Uterus (tissue), 4 donors: ENCODE measurements at regions of chr6 and their contacts with region 1.

Region 1: DNA sequence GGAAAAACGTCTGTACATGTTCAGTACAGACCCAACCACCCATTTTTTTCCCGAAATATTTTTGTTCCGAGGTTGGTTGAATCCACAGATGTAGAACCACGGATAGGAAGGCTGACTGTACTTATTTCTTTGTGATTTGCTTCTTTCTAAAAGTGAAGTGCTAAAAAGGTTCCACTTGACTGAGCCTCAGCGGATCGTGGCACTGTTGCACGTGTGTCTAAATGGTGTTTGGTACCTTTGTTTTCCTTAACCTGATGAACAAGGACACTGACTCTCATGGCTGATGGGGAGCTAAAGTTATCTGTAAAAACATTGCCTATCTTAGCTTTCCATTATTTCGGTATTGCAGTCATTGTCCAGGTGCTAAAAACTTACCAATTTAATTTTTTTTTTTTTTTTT is 6.2 kb downstream of the BPHL start:
- DNase-seq: no peak
- H3K4me3 ChIP-seq: no peak overlapping the region
- H3K27ac ChIP-seq: no peak overlapping the region
- H3K4me1 ChIP-seq: no peaks in the 10 kb centered on the region
- H3K27me3 ChIP-seq: no peaks in the 10 kb centered on the region
- CTCF ChIP-seq: no peak
- POLR2A ChIP-seq: no peak

Region 2: DNA sequence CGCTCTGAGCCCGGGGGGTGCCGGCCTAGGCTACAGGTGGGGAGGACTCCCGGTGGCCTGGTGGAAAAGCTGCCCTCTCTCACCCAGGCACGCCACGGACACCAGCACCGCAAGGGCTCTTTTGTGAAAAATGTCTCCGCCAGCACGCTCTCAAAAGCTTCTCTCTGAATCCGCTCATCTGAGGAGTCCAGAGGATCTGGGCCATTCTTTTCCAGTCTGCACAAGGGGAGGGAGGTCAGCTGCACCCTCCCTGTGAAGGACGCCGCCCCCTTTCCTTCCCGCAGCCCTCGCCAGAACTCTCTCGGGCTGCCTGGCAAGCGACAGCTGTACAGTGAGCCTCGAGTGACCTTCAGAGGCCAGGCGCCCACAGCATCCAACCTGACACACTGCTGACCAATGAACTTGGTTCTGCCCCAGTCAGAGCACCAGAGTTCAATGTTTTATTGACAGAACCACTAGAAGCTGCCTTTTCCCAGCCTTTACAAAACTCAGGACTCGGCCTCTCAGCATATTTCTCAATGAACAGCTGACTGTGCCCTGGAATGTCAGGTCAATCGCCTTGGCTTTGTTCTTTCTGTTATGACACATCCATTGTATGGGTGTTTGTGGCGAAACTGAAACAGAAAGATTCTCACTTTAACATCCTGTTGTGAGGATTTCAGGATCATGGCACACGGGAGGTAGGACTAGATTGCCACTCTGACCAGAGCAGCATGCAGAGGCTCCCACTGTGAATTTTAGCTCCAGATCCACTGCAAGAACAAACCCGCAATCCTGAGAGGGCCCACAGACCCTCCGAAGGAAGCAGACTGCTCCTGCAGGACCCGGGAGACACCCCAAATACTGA is 248.2 kb before region 1 on chr6:
- intact Hi-C with region 1: no loop called
- DNase-seq: peak; percentile 60 to 70
- H3K4me3 ChIP-seq: peak overlapping the region; percentile 48 to 53
- H3K27ac ChIP-seq: peak overlapping the region; percentile 71 to 88
- H3K4me1 ChIP-seq: peaks cover 0 to 6% of the 10 kb centered on the region in 2 donors
- H3K27me3 ChIP-seq: no peaks in the 10 kb centered on the region
- CTCF ChIP-seq: no peak
- POLR2A ChIP-seq: peak; percentile 19

Region 3: DNA sequence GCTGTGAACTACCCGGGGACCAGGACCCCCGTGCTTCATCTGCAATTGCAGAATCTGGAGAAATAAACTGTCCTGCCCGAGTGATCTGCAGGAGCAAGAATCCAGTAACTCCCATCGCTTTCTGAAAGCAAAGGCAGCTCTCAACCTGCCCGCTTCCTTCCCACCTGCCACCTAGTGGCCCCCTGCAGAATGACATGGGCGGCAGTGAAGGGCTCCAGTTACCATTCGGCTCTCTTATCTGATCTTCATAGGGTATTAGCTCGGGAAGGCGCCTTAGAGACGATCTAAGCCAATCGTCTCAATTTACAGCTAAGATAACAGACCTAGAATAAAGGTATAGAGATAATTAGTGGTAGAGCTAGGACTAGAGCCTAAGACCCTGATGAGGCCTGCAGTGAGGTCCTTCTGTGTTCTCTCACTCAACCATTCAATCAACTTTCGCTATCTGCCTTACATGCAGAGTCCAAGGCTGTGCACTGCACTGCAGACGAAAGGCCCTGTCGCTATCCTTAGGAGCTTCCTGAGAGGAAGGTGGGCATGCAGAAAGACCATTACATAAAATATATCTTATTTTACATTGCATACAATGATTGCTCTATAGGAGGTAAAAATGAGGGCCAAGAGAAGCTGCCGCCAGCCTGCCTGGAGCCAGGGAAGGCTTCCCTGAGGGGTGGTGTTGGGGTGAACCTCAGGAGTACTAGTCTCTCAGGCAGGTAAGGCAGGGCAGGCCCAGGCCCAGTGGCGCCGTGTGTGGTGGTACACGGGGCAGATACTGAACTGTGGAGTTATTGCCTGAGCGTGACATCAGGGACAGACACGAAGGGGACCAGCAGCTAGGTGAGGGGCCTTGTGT is 127.0 kb after region 1 on chr6:
- intact Hi-C with region 1: loop called (anchors 5 kb)
- DNase-seq: peak; percentile 81 to 83
- H3K4me3 ChIP-seq: no peak overlapping the region
- H3K27ac ChIP-seq: no peak overlapping the region
- H3K4me1 ChIP-seq: no peaks in the 10 kb centered on the region
- H3K27me3 ChIP-seq: no peaks in the 10 kb centered on the region
- CTCF ChIP-seq: peak; percentile 91 to 98 (median 95)
- POLR2A ChIP-seq: no peak

Region 4: GRCh38 chr6:3506199-3506598 is 381.5 kb after region 1 on chr6:
- intact Hi-C with region 1: no loop called
- DNase-seq: no peak
- H3K4me3 ChIP-seq: no peak overlapping the region
- H3K27ac ChIP-seq: no peak overlapping the region
- H3K4me1 ChIP-seq: no peaks in the 10 kb centered on the region
- H3K27me3 ChIP-seq: no peaks in the 10 kb centered on the region
- CTCF ChIP-seq: no peak
- POLR2A ChIP-seq: no peak